Naive thymus-derived CD4-positive, alpha-beta T cell (primary cell): ENCODE measurements at regions of chr4 and their contacts with region 1.

Region 1: DNA sequence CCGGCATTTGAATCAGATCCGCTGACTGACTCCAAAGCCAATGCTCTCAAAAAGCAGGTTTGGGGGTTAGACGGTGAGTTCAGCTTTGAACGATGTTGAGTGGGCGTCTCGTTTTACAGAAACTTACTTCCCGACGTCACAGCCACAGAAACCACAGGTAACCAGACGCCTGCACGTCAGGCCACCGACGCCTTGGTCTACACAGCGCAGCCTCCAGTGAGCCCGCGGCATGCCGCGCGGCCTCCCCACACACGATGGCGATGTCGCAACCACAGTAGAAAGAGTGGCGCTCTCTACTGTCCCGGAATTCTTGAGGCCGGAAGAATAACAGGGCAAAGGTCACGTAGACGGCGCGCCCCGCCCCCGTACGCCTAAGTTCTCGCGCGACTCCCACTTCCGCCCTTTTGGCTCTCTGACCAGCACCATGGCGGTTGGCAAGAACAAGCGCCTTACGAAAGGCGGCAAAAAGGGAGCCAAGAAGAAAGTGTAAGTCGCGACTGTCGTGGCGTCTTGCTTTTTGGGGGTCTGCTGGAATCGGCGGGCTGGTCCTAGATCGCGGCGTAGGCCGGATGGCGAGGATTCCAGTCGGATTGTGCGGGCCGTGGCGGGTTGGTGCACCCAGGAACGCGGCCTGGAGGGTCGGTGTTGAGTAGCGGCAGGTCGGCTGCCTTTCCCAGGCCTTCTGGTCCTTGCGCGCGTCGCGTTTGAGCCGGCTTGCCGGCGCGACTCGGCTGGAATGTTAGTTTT is at the start of gene RPS3A:
- DNase-seq: peak; percentile 95 to 100 (median 99)
- ATAC-seq: peak; percentile 97
- H3K4me3 ChIP-seq: peak within 1 kb of the TSS; percentile 96
- H3K4me3 Mint-ChIP-seq: peak within 1 kb of the TSS; percentile 89 to 99 (median 96)
- H3K27ac ChIP-seq: peak within 1 kb of the TSS; percentile 89
- H3K27ac Mint-ChIP-seq: peak within 1 kb of the TSS; percentile 97 to 99 (median 98)
- H3K4me1 ChIP-seq: peaks cover 14 to 18% of the 10 kb centered on the region in 2 donors
- H3K4me1 Mint-ChIP-seq: peaks cover 24 to 43% (median 28%) of the 10 kb centered on the region in 7 donors
- H3K27me3 ChIP-seq: no peaks in the 10 kb centered on the region
- H3K27me3 Mint-ChIP-seq: peaks cover 0 to 4% (median 0%) of the 10 kb centered on the region in 5 donors
- total RNA-seq, gene RPS3A: 1,723 to 5,358 (median 3,483) TPM

Region 2: GRCh38 chr4:151031831-151032605 is 67.4 kb before region 1 on chr4:
- CTCF ChIA-PET with region 1: no interaction called
- POLR2A ChIA-PET with region 1: no interaction called
- intact Hi-C with region 1: loop called in 1 of 2 experiments (anchors 5 kb)
- DNase-seq: no peak
- ATAC-seq: no peak
- H3K4me3 ChIP-seq: no peak overlapping the region
- H3K4me3 Mint-ChIP-seq: peak overlapping the region in 9 of 10 donors; percentile 16 to 82 (median 59)
- H3K27ac ChIP-seq: no peak overlapping the region
- H3K27ac Mint-ChIP-seq: peak overlapping the region in 3 of 9 donors; percentile 2 to 75 (median 73)
- H3K4me1 ChIP-seq: peaks cover 0 to 5% of the 10 kb centered on the region in 2 donors
- H3K4me1 Mint-ChIP-seq: peaks cover 0 to 20% (median 11%) of the 10 kb centered on the region in 7 donors
- H3K27me3 ChIP-seq: no peaks in the 10 kb centered on the region
- H3K27me3 Mint-ChIP-seq: peaks cover 0 to 13% (median 0%) of the 10 kb centered on the region in 5 donors

Region 3: GRCh38 chr4:151408630-151409469 is 309.4 kb after region 1 on chr4 and contains the start of gene FHIP1A:
- CTCF ChIA-PET with region 1: no interaction called
- POLR2A ChIA-PET with region 1: no interaction called
- intact Hi-C with region 1: loop called in 1 of 2 experiments (anchors 1 kb)
- DNase-seq: peak; percentile 67 to 89 (median 87)
- ATAC-seq: peak; percentile 96
- H3K4me3 ChIP-seq: peak within 1 kb of the TSS; percentile 63
- H3K4me3 Mint-ChIP-seq: peak within 1 kb of the TSS; percentile 86 to 97 (median 94)
- H3K27ac ChIP-seq: peak within 1 kb of the TSS; percentile 53
- H3K27ac Mint-ChIP-seq: peak within 1 kb of the TSS; percentile 21 to 92 (median 85)
- H3K4me1 ChIP-seq: peaks cover 0 to 6% of the 10 kb centered on the region in 2 donors
- H3K4me1 Mint-ChIP-seq: peaks cover 15 to 26% (median 23%) of the 10 kb centered on the region in 7 donors
- H3K27me3 ChIP-seq: no peaks in the 10 kb centered on the region
- H3K27me3 Mint-ChIP-seq: peaks cover 0 to 56% (median 8%) of the 10 kb centered on the region in 5 donors
- total RNA-seq, gene FHIP1A: 0.05 to 2.7 (median 1.9) TPM